ENCODE measurements at regions of chr15 and their contacts with region 1.

Region 1: GRCh38 chr15:57680021-57680420 is 26.5 kb upstream of the POLR2M start:
- DNase-seq: peak; percentile 35
- H3K4me3 ChIP-seq: no peak overlapping the region
- H3K27ac ChIP-seq: no peak overlapping the region
- H3K4me1 ChIP-seq: no peaks in the 10 kb centered on the region
- H3K27me3 ChIP-seq: no peaks in the 10 kb centered on the region
- CTCF ChIP-seq: no peak
- POLR2A ChIP-seq: no peak

Region 2: DNA sequence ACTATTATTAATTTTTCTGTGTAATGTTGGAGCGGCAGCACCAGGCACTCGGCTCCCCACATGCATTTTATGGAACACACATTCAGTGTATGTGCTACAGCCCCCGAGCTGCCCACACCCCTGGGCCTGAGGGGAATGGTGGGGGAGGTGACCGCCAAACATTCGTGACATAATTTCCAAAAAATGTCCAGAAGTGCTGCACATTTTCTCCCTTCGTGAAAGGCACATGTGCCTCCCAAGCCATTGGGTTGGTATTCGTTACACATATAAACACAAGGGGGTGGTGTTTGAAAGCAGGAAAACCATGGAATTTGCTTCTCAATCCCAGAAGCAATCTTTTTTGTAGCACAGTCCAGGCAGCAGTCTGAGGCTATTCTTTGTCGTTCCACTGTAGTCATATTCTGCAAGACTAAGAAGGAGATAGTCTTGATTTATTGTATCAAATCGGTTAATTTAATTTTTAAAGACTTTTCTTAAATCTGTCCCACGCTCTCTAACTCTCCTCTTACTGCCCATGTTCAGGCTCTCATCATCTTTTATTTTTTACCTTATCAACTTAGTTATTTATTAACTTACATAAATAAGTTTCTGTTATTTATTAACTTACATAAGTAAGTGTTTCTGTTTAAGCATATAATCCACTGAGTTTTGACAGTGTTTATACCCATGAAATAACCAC is 12.7 kb before region 1 on chr15:
- CTCF ChIA-PET with region 1: interaction called, 27 read pairs
- POLR2A ChIA-PET with region 1: no interaction called
- dilution Hi-C with region 1: no loop called
- intact Hi-C with region 1: no loop called
- DNase-seq: peak; percentile 67
- H3K4me3 ChIP-seq: no peak overlapping the region
- H3K27ac ChIP-seq: no peak overlapping the region
- H3K4me1 ChIP-seq: peaks cover 7% of the 10 kb centered on the region
- H3K27me3 ChIP-seq: no peaks in the 10 kb centered on the region
- CTCF ChIP-seq: peak in 1 of 2 donors; percentile 42
- POLR2A ChIP-seq: no peak

Region 3: DNA sequence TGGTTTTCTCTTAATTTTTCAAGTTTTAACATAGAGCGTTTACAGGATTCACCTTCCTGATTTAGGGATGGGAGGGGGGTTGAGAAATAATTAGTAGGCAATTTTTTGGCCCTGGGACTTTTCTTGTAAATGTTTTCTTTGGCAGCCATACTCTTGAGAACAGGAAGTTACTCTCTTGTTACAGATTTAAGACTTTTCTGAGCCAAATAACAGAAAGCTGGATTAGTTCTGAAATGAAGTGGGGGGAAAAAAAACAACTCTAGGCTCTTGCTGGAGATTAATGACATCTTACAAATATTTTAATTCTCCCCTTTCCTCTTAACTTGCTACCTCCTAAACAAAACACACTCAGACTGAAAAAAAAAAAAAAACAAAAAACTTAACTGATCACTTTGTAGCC is 12.7 kb after region 1 on chr15:
- CTCF ChIA-PET with region 1: interaction called, 4 read pairs
- POLR2A ChIA-PET with region 1: no interaction called
- dilution Hi-C with region 1: no loop called
- intact Hi-C with region 1: loop called (anchors 2 kb)
- DNase-seq: peak; percentile 86
- H3K4me3 ChIP-seq: peak overlapping the region in 1 of 3 experiments; percentile 12
- H3K27ac ChIP-seq: no peak overlapping the region
- H3K4me1 ChIP-seq: peaks cover 22% of the 10 kb centered on the region
- H3K27me3 ChIP-seq: no peaks in the 10 kb centered on the region
- CTCF ChIP-seq: no peak
- POLR2A ChIP-seq: no peak